Gastrocnemius medialis (tissue), 4 donors: ENCODE measurements at regions of chr7 and their contacts with region 1.

Region 1: GRCh38 chr7:106285051-106285854 is 470 bp upstream of the NAMPT start:
- DNase-seq: peak; percentile 97 to 98
- ATAC-seq: peak; percentile 82 to 86
- H3K4me3 ChIP-seq: peak overlapping the region; percentile 73 to 85 (median 78)
- H3K27ac ChIP-seq: peak overlapping the region; percentile 87 to 98 (median 97)
- H3K4me1 ChIP-seq: peaks cover 18 to 24% of the 10 kb centered on the region in 2 donors
- H3K27me3 ChIP-seq: no peaks in the 10 kb centered on the region
- CTCF ChIP-seq: peak in 1 of 5 experiments; percentile 7
- POLR2A ChIP-seq: peak; percentile 61 to 78

Region 2: DNA sequence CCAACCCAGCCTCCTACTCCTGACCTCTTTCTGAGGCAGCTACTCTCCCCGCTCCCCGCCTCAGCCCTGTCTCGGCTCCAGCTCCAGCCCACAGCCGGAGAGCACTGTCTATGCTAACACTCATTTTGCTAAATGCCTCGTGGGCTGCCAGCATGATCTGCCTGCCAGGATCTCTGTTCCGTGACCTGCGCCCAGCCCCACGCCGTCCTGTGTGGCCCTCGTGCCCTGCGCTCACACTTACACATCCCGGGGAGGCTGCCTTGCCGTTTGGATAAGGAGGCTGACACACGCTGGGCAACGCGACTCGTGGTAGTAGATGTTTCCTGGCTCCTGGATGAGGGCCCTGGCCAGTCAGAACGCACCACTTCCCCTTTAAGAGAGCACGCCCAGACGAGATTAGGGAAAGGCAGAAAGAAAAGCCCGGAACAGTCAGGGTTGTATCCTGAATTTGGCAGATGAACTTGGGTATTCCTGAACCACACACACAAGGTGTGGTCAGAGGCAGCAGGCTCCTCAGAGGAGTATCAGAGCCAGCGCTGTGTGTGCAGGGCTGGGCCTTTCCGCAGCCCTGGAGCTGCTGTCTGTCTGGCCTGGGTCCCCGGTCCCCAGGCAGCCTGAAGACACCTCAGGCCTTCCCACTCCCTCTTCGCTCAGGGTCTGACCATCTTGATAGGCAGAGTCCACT is 606.3 kb before region 1 on chr7:
- in situ Hi-C with region 1: no loop called
- intact Hi-C with region 1: loop called (anchors 5 kb)
- DNase-seq: peak; percentile 75 to 81
- ATAC-seq: peak; percentile 82 to 91
- H3K4me3 ChIP-seq: peak overlapping the region; percentile 39 to 60 (median 50)
- H3K27ac ChIP-seq: peak overlapping the region; percentile 59 to 83 (median 74)
- H3K4me1 ChIP-seq: peaks cover 43 to 63% of the 10 kb centered on the region in 2 donors
- H3K27me3 ChIP-seq: no peaks in the 10 kb centered on the region
- CTCF ChIP-seq: no peak
- POLR2A ChIP-seq: peak; percentile 29 to 53

Region 3: DNA sequence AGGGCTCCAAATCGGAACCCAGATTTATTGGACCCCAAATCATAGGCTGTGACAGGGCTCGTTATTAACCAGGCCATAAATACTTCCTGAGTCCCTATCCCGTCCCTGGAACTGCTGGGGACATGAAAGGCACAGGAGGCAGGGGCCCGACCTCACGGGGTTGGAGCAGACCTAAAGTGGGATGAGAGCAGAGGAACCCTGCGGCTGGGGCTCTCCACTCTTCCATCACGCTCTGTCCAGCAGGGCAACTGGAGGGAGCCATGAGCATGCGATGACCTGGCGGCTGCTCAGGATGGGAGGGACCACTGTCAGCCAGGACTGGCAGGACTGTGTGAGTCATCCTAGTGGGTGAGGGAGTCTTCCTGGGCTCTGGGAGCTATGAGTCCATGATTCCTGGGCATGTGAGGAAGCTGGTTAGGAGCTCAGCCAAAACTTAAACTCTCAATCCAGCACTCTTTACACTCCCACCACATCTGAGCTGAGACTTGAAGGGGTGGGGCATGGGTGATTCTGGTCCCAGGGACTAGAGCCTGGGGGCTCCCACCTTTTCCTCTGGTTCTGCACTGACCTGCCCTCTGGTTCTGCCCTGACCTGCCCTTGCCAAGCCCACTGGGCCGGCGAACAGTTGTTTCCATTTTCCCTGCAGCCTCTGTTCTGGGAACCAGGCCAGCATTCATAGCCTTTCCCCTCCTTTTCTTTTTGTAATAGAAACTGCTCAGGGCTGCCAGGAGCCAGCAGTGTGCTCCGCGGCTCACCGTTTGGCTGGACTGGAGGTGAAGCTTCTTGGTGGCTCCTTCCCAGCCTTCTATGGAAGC is 220.3 kb before region 1 on chr7:
- in situ Hi-C with region 1: loop called in 1 of 4 experiments (anchors 25 kb)
- intact Hi-C with region 1: loop called (anchors 10 kb)
- DNase-seq: peak; percentile 94 to 95
- ATAC-seq: peak; percentile 94 to 96
- H3K4me3 ChIP-seq: peak overlapping the region; percentile 35 to 55 (median 48)
- H3K27ac ChIP-seq: peak overlapping the region; percentile 81 to 92 (median 86)
- H3K4me1 ChIP-seq: peaks cover 22 to 35% of the 10 kb centered on the region in 2 donors
- H3K27me3 ChIP-seq: no peaks in the 10 kb centered on the region
- CTCF ChIP-seq: peak in 1 of 5 experiments; percentile 20
- POLR2A ChIP-seq: no peak

Region 4: DNA sequence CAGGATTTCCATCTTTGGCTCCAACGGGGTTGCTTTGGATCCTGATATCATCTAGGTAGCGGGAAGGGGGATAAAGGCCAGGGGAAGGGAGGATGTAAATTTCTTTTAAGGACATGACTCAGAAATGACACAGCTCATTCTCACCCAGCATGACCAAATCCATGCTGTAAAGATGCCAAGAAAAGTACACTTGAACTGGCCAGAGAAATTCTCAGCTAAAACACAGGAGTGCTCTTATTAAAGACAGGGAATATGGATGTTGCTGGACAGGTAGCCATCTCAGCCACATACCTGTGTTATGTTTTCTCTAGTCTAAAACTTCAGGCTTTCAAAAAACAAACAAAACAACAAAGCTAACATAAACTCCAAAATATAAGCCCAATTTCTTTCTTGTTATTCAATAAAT is 68.7 kb before region 1 on chr7:
- in situ Hi-C with region 1: no loop called
- intact Hi-C with region 1: loop called (anchors 2 kb)
- DNase-seq: peak; percentile 68 to 71
- ATAC-seq: peak; percentile 96
- H3K4me3 ChIP-seq: peak overlapping the region in 3 of 4 donors; percentile 19 to 40 (median 33)
- H3K27ac ChIP-seq: peak overlapping the region; percentile 73 to 91 (median 80)
- H3K4me1 ChIP-seq: peaks cover 16 to 27% of the 10 kb centered on the region in 2 donors
- H3K27me3 ChIP-seq: no peaks in the 10 kb centered on the region
- CTCF ChIP-seq: no peak
- POLR2A ChIP-seq: no peak

Region 5: GRCh38 chr7:106659963-106660861 is 375.0 kb after region 1 on chr7:
- in situ Hi-C with region 1: no loop called
- intact Hi-C with region 1: loop called (anchors 2 kb)
- DNase-seq: peak; percentile 23 to 59
- ATAC-seq: peak; percentile 57 to 66
- H3K4me3 ChIP-seq: peak overlapping the region; percentile 60 to 89 (median 78)
- H3K27ac ChIP-seq: peak overlapping the region; percentile 82 to 91 (median 88)
- H3K4me1 ChIP-seq: peaks cover 8 to 12% of the 10 kb centered on the region in 2 donors
- H3K27me3 ChIP-seq: no peaks in the 10 kb centered on the region
- CTCF ChIP-seq: peak; percentile 49 to 76 (median 67)
- POLR2A ChIP-seq: peak in 1 of 2 donors; percentile 9

Region 6: DNA sequence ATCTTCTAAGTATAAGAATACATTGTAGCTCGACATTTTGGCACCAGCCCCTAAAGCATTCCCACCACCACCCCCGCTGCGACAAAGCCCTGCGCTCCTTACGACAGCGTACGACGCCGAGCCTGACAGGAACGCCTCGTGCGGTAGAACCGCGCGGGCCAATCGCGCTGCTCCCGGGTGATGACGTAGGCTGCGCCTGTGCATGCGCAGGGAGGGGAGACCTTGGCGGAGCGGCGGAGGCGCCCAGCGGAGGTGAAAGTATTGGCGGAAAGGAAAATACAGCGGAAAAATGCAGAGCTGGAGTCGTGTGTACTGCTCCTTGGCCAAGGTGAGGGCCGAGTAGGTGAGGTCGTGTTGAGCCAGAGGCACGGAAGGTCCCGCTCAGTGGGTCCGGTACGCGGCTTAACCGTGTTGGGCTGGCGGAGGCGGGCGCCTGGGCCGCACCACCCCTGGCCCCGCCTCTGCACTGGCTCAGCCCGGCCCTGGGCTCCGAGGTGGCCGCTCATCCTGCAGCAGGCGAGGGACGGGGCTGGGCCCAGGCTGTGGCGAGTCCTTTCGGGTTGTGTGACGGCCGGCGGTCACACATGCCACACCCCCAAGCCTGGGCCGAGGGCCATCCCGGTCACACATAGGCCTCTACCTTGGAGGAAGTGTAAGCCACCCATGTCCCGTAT is 1605.8 kb after region 1 on chr7 and contains the start of gene DLD:
- in situ Hi-C with region 1: no loop called
- intact Hi-C with region 1: loop called (anchors 10 kb)
- DNase-seq: peak; percentile 89 to 92
- ATAC-seq: peak; percentile 98
- H3K4me3 ChIP-seq: peak within 1 kb of the TSS; percentile 68 to 90 (median 84)
- H3K27ac ChIP-seq: peak within 1 kb of the TSS; percentile 93 to 98 (median 96)
- H3K4me1 ChIP-seq: peaks cover 36 to 42% of the 10 kb centered on the region in 2 donors
- H3K27me3 ChIP-seq: no peaks in the 10 kb centered on the region
- CTCF ChIP-seq: no peak
- POLR2A ChIP-seq: peak; percentile 88 to 91
- total RNA-seq, gene DLD: 110 to 157 (median 146) TPM